B cell (primary cell): ENCODE measurements at regions of chr19 and their contacts with region 1.

Region 1: GRCh38 chr19:23249911-23250649 is at the start of gene ZNF724:
- DNase-seq: peak; percentile 92
- ATAC-seq: peak; percentile 100
- H3K4me3 ChIP-seq: peak within 1 kb of the TSS; percentile 39 to 98 (median 87)
- H3K4me3 Mint-ChIP-seq: peak within 1 kb of the TSS; percentile 98
- H3K27ac ChIP-seq: peak within 1 kb of the TSS; percentile 59 to 67
- H3K27ac Mint-ChIP-seq: peak within 1 kb of the TSS; percentile 88
- H3K4me1 ChIP-seq: peaks cover 5 to 11% of the 10 kb centered on the region in 2 donors
- H3K4me1 Mint-ChIP-seq: peaks cover 12% of the 10 kb centered on the region
- H3K27me3 ChIP-seq: no peaks in the 10 kb centered on the region
- H3K27me3 Mint-ChIP-seq: no peaks in the 10 kb centered on the region
- CTCF ChIP-seq: no peak
- total RNA-seq, gene ZNF724: 7.9 and 10.0 TPM in 2 replicates

Region 2: GRCh38 chr19:23116802-23117571 is 133.1 kb before region 1 on chr19 and contains the start of gene ZNF730:
- CTCF ChIA-PET with region 1: no interaction called
- POLR2A ChIA-PET with region 1: no interaction called
- intact Hi-C with region 1: loop called (anchors 2 kb)
- DNase-seq: peak; percentile 68
- ATAC-seq: peak; percentile 98
- H3K4me3 ChIP-seq: peak within 1 kb of the TSS; percentile 50 to 71 (median 62)
- H3K4me3 Mint-ChIP-seq: peak within 1 kb of the TSS; percentile 88
- H3K27ac ChIP-seq: peak within 1 kb of the TSS in 1 of 2 donors; percentile 55
- H3K27ac Mint-ChIP-seq: peak within 1 kb of the TSS; percentile 57
- H3K4me1 ChIP-seq: peaks cover 0 to 11% of the 10 kb centered on the region in 2 donors
- H3K4me1 Mint-ChIP-seq: peaks cover 16% of the 10 kb centered on the region
- H3K27me3 ChIP-seq: no peaks in the 10 kb centered on the region
- H3K27me3 Mint-ChIP-seq: no peaks in the 10 kb centered on the region
- CTCF ChIP-seq: no peak
- total RNA-seq, gene ZNF730: 0.78 and 0.86 TPM in 2 replicates

Region 3: DNA sequence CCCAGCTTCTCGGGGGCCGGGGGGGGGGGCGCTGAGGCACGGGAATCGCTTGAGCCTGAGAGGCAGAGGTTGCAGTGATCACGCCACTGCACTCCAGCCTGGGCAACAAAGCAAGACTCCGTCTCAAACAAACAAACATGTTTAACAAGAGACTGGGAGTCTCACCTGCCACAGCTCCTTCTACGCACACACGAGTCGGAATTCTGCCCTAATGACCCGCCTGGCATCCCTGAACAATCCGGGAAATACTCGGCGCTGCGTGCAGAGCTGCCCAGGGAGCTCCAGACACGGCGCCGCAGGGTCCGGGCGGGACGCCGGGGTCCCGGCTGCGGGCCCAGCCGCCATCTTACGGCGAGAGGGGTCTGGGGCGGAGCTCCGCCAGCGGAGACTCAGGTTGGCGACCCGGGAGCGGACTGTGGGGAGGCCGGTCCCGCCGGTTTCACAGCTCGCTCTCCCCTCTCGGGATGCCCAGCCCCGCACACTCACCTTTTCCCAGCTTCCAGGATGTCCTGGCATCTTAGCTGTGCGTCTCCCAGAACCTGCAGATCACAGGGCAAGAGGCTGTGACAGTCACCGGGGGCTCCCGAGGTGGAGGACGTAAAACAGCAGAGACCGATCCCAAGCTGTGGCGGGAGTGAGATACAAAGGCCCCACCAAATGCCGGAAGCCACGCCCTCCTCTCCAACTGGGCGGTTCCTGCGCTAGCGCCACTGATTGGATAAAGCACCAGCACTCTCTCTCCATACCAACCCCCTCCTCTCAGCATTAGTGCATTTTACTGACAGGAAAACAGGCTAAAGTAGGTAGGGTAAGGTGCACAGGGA is 23.7 kb after region 1 on chr19:
- CTCF ChIA-PET with region 1: interaction called, 12 read pairs
- POLR2A ChIA-PET with region 1: interaction called, 10 read pairs
- intact Hi-C with region 1: loop called (anchors 1 kb)
- DNase-seq: peak; percentile 91
- ATAC-seq: peak; percentile 99
- H3K4me3 ChIP-seq: peak overlapping the region; percentile 81 to 99 (median 96)
- H3K4me3 Mint-ChIP-seq: peak overlapping the region; percentile 98
- H3K27ac ChIP-seq: peak overlapping the region; percentile 85 to 89
- H3K27ac Mint-ChIP-seq: peak overlapping the region; percentile 97
- H3K4me1 ChIP-seq: peaks cover 6 to 20% of the 10 kb centered on the region in 2 donors
- H3K4me1 Mint-ChIP-seq: peaks cover 30% of the 10 kb centered on the region
- H3K27me3 ChIP-seq: no peaks in the 10 kb centered on the region
- H3K27me3 Mint-ChIP-seq: no peaks in the 10 kb centered on the region
- CTCF ChIP-seq: no peak

Region 4: GRCh38 chr19:23294141-23294540 is 44.1 kb after region 1 on chr19:
- CTCF ChIA-PET with region 1: no interaction called
- POLR2A ChIA-PET with region 1: no interaction called
- intact Hi-C with region 1: no loop called
- DNase-seq: no peak
- ATAC-seq: no peak
- H3K4me3 ChIP-seq: no peak overlapping the region
- H3K4me3 Mint-ChIP-seq: no peak overlapping the region
- H3K27ac ChIP-seq: no peak overlapping the region
- H3K27ac Mint-ChIP-seq: no peak overlapping the region
- H3K4me1 ChIP-seq: no peaks in the 10 kb centered on the region
- H3K4me1 Mint-ChIP-seq: no peaks in the 10 kb centered on the region
- H3K27me3 ChIP-seq: no peaks in the 10 kb centered on the region
- H3K27me3 Mint-ChIP-seq: no peaks in the 10 kb centered on the region
- CTCF ChIP-seq: no peak

Region 5: GRCh38 chr19:23305555-23305954 is 55.5 kb after region 1 on chr19:
- CTCF ChIA-PET with region 1: no interaction called
- POLR2A ChIA-PET with region 1: no interaction called
- intact Hi-C with region 1: no loop called
- DNase-seq: no peak
- ATAC-seq: no peak
- H3K4me3 ChIP-seq: no peak overlapping the region
- H3K4me3 Mint-ChIP-seq: no peak overlapping the region
- H3K27ac ChIP-seq: no peak overlapping the region
- H3K27ac Mint-ChIP-seq: no peak overlapping the region
- H3K4me1 ChIP-seq: no peaks in the 10 kb centered on the region
- H3K4me1 Mint-ChIP-seq: no peaks in the 10 kb centered on the region
- H3K27me3 ChIP-seq: peaks cover 0 to 3% (median 0%) of the 10 kb centered on the region in 4 experiments
- H3K27me3 Mint-ChIP-seq: peaks cover 4% of the 10 kb centered on the region
- CTCF ChIP-seq: no peak